PC-3 (cell line): ENCODE measurements at regions of chr1 and their contacts with region 1.

Region 1: GRCh38 chr1:217049081-217049480 is 325.9 kb upstream of the ESRRG start:
- DNase-seq: no peak
- ATAC-seq: no peak
- H3K4me3 ChIP-seq: no peak overlapping the region
- H3K27ac ChIP-seq: no peak overlapping the region
- H3K4me1 ChIP-seq: no peaks in the 10 kb centered on the region
- H3K27me3 ChIP-seq: no peaks in the 10 kb centered on the region
- CTCF ChIP-seq: no peak

Region 2: GRCh38 chr1:216332462-216332861 is 716.6 kb before region 1 on chr1:
- CTCF ChIA-PET with region 1: no interaction called
- POLR2A ChIA-PET with region 1: interaction called, 14 read pairs
- intact Hi-C with region 1: no loop called
- DNase-seq: peak; percentile 45
- ATAC-seq: peak; percentile 65
- H3K4me3 ChIP-seq: no peak overlapping the region
- H3K27ac ChIP-seq: no peak overlapping the region
- H3K4me1 ChIP-seq: 0 out of 2 replicates have a peak, but pooled peaks cover 1% of the 10 kb centered on the region
- H3K27me3 ChIP-seq: no peaks in the 10 kb centered on the region
- CTCF ChIP-seq: no peak

Region 3: DNA sequence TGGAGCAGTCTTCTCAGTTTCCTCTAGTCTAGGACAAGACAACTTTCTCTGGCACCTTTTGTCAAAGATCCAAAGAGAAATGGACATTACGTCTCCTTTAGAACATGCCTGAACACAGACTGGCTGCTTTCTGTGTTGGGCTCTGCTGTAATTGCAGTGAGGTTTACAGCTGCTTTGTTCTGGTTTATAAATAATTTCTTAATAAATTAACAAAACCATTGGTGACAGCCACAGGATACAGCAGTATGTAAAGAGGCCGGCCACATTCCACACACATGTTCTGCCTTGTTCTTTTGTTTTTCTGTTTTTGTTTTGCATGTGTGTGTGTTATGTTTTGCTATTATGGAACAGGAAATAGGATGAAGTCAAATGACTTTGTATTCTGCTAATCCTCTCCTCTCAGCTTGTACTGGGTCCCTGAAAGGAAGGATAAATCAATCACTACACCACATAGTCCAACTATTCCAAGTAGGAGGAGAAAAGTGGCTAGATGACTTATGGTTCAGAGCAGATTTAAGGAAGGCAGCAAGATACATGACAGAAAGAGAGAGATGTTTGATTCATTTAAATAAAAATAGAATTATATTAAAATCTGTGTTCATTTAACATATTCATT is 164.4 kb before region 1 on chr1:
- CTCF ChIA-PET with region 1: no interaction called
- POLR2A ChIA-PET with region 1: no interaction called
- intact Hi-C with region 1: no loop called
- DNase-seq: no peak
- ATAC-seq: no peak
- H3K4me3 ChIP-seq: no peak overlapping the region
- H3K27ac ChIP-seq: no peak overlapping the region
- H3K4me1 ChIP-seq: no peaks in the 10 kb centered on the region
- H3K27me3 ChIP-seq: peaks cover 3% of the 10 kb centered on the region; the same call in 1 of the 2 replicates
- CTCF ChIP-seq: no peak

Region 4: DNA sequence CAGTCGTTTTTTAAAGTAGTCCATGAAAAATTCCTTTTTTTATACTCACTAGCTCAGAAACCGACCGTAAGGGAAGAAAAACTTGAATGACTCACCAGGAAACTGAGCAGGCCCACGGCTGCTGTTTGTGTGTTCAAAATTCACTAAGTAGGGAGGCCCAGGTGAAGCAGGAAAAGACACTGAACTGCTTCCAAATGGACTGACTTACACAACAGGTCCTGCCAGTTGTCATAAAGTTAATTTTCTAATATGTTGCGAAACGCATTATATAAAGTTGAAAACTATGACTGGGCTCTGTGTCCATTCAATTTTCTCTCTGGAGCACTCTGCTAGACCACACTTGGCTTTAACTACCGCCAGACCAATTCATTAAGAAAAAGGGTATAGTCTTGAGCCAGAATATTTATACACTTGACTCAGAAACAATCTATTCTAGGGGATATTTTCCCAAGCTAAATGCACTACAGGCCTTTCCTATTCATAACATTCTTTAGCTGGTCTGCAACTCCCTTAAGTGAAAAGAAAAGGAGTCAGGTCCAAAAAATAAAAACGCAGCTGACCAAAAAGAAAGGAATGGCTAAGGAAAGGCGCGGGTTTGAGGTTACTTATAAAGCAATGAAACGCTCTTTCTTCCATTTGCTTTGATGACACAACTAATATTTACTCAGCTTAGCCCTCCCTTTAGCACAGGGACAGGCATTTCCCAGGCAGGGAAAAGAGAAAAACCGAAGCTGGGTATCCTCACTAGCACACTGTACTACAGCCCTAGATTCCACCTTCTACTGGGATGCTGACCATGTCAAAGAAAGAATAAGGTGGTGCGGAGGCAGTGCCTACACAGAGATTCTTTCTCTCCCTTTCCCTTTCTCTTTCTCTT is 19.6 kb before region 1 on chr1:
- CTCF ChIA-PET with region 1: no interaction called
- POLR2A ChIA-PET with region 1: no interaction called
- intact Hi-C with region 1: no loop called
- DNase-seq: peak; percentile 99
- ATAC-seq: peak; percentile 94
- H3K4me3 ChIP-seq: peak overlapping the region; percentile 55
- H3K27ac ChIP-seq: peak overlapping the region; percentile 91
- H3K4me1 ChIP-seq: peaks cover 46% of the 10 kb centered on the region
- H3K27me3 ChIP-seq: no peaks in the 10 kb centered on the region
- CTCF ChIP-seq: no peak

Region 5: DNA sequence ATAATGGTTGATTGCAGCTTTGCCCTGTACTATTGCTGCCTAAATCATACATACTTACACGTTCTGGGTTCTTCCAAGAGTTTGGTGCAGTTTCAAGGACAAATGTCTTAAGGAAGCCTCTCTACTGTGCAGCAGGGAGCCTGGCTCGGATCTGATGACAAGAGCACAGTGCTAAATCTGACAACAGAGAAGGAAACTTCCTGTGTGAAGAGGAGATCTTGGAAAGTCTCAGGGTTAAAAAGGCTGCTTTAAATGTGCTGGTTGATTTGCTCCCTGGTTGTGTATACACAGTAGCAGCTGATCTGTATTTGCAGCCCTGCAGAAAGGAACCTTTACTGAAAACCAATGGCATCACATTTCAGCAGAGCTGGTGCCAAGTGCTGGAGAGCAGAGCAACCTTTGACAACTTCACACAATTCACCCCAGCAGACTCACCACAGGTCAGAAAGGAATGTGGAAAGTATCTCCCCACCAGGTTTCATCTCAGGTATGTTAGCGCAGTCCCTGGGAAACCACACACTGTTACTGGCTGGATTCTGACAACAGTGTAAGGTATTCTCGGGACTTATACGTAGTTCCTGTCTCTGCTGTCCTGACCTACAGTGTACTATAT is 29.1 kb after region 1 on chr1:
- CTCF ChIA-PET with region 1: no interaction called
- POLR2A ChIA-PET with region 1: no interaction called
- intact Hi-C with region 1: no loop called
- DNase-seq: peak; percentile 66
- ATAC-seq: peak; percentile 82
- H3K4me3 ChIP-seq: no peak overlapping the region
- H3K27ac ChIP-seq: no peak overlapping the region
- H3K4me1 ChIP-seq: peaks cover 4% of the 10 kb centered on the region; the same call in 1 of the 2 replicates
- H3K27me3 ChIP-seq: no peaks in the 10 kb centered on the region
- CTCF ChIP-seq: no peak